AG04449 (cell line): ENCODE measurements at regions of chr3 and their contacts with region 1.

Region 1: DNA sequence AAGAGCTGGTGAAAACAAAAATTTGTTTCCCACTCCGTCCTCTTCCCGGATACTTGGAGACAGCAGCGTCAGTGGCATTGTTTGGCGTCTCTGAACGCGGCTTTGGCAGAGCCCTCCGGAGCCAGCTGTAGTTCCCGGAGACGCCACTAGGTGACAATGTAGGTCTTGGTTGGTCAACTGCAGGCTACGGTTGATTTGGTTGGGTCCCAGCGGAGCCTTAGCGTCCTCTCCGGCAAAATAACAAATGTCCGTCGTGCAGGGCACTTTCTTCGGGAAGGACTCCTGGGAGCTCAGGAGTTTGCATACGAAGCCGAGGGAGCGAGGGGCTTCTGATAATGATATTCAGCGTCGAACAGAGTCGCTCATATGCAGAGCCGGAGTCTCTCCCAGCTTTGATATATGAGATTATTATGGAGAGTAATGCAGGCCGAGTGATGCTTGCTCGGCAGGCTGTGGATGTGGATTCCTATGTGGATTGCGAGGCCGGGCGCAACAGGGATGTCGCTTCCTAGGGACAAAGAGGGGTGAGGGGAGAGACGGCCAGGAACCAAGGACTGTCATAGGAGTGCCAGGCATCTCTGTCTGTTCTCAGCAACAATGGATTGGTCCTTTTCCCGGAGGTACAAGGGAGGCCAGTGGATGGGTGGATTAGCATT is 74.8 kb downstream of the IL20RB start:
- DNase-seq: peak; percentile 17
- H3K4me3 ChIP-seq: peak overlapping the region; percentile 59
- CTCF ChIP-seq: peak; percentile 90

Region 2: DNA sequence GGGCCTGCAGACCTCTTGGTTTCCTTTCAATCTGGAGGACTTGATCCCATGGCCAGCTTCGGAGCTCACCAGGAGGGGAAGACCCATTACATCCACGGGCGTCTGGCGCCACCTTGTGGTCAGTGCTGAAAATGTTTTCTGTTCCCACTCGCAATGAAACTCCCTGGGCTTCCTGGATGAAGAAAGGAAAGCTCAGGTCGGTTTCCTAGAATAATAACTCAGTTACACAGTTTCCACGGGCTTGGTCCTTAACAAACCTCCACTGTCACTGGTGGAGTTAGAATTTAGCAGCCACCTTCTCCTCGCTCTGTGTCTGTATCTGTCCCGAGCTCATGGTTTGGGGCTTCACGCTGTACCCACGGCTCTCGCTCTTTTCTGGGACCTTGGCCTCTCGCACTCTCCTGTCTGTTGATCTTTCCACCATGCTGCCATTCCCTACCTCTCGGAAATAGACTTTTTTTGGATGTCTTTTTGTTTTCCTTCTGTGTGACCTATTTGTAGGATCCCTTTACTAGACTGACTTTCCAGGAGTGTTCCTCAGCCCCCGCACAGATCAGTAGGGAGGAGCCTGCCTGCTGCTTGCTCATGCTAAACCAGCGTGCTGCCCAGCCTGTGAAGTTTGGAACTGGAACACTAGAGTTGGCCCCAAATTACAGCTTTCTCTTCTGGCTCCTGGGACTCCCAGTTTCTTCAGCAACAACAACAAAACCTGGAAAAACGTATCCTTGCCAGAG is 18.5 kb before region 1 on chr3:
- CTCF ChIA-PET with region 1: interaction called, 16 read pairs
- POLR2A ChIA-PET with region 1: no interaction called
- DNase-seq: peak; percentile 29
- H3K4me3 ChIP-seq: peak overlapping the region; percentile 67
- CTCF ChIP-seq: peak; percentile 75

Region 3: GRCh38 chr3:137020315-137020714 is 12.3 kb before region 1 on chr3:
- CTCF ChIA-PET with region 1: interaction called, 45 read pairs
- POLR2A ChIA-PET with region 1: no interaction called
- DNase-seq: no peak
- H3K4me3 ChIP-seq: no peak overlapping the region
- CTCF ChIP-seq: no peak

Region 4: GRCh38 chr3:137052298-137052697 is 19.7 kb after region 1 on chr3:
- CTCF ChIA-PET with region 1: interaction called, 13 read pairs
- POLR2A ChIA-PET with region 1: no interaction called
- DNase-seq: no peak
- H3K4me3 ChIP-seq: no peak overlapping the region
- CTCF ChIP-seq: no peak

Region 5: DNA sequence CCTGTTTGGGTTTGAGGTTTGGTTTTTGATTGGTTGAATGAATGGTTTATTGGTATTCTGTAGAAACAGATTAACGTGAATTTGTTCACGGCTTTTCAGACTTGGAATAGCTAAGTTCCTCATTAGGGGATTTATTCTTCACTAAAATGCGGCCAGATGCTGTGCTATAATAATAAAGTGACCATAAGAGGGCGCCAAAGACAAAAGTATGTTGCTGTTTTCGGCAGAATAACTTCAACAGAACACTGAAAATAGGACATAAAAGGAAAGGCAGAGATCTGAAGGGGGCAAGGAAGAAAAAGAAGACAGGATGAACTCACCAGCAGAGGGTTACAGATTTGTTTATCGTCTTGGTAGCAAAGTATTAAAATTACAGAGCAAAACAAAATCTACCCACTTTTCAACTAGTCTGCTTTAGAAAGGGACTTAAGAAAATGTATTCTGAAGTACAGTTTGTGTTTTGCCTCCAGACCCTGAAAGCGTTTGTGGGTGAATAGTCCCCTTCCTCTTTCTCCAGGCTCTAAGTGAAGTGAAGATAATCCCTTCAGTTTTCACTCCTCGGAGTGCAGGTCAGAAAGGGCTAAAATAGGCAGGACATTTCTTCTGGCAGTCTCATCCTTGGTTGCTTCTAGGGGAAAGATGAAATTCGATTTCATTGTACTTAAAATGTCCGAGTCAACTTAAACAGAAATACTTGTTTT is 72.8 kb after region 1 on chr3:
- CTCF ChIA-PET with region 1: interaction called, 14 read pairs
- POLR2A ChIA-PET with region 1: no interaction called
- DNase-seq: no peak
- H3K4me3 ChIP-seq: no peak overlapping the region
- CTCF ChIP-seq: peak; percentile 40

Region 6: GRCh38 chr3:137946345-137946973 is 913.9 kb after region 1 on chr3:
- CTCF ChIA-PET with region 1: interaction called, 38 read pairs
- POLR2A ChIA-PET with region 1: no interaction called
- DNase-seq: peak; percentile 9
- H3K4me3 ChIP-seq: no peak overlapping the region
- CTCF ChIP-seq: peak; percentile 63

Region 7: GRCh38 chr3:137970914-137971831 is 938.6 kb after region 1 on chr3:
- CTCF ChIA-PET with region 1: interaction called, 22 read pairs
- POLR2A ChIA-PET with region 1: no interaction called
- DNase-seq: no peak
- H3K4me3 ChIP-seq: no peak overlapping the region
- CTCF ChIP-seq: peak; percentile 91